GM12878 (cell line): ENCODE measurements at regions of chr1 and their contacts with region 1.

Region 1: GRCh38 chr1:218742467-218743260 is 397.5 kb downstream of the TGFB2 start:
- DNase-seq: no peak
- ATAC-seq: no peak
- H3K4me3 ChIP-seq: no peak overlapping the region
- H3K27ac ChIP-seq: no peak overlapping the region
- H3K4me1 ChIP-seq: no peaks in the 10 kb centered on the region
- H3K27me3 ChIP-seq: no peaks in the 10 kb centered on the region
- CTCF ChIP-seq: no peak
- EP300 ChIP-seq: no peak
- POLR2A ChIP-seq: no peak
- RAD21 ChIP-seq: no peak

Region 2: GRCh38 chr1:218785928-218786327 is 43.3 kb after region 1 on chr1:
- CTCF ChIA-PET with region 1: no interaction called
- POLR2A ChIA-PET with region 1: no interaction called
- RAD21 ChIA-PET with region 1: no interaction called
- SMC1A ChIA-PET with region 1: no interaction called
- in situ Hi-C with region 1: loop called (anchors 5 kb)
- intact Hi-C with region 1: no loop called
- DNase-seq: no peak
- ATAC-seq: no peak
- H3K4me3 ChIP-seq: no peak overlapping the region
- H3K27ac ChIP-seq: no peak overlapping the region
- H3K4me1 ChIP-seq: no peaks in the 10 kb centered on the region
- H3K27me3 ChIP-seq: no peaks in the 10 kb centered on the region
- CTCF ChIP-seq: no peak
- EP300 ChIP-seq: no peak
- POLR2A ChIP-seq: no peak
- RAD21 ChIP-seq: no peak